IMR-90 (cell line): ENCODE measurements at regions of chr4 and their contacts with region 1.

Region 1: DNA sequence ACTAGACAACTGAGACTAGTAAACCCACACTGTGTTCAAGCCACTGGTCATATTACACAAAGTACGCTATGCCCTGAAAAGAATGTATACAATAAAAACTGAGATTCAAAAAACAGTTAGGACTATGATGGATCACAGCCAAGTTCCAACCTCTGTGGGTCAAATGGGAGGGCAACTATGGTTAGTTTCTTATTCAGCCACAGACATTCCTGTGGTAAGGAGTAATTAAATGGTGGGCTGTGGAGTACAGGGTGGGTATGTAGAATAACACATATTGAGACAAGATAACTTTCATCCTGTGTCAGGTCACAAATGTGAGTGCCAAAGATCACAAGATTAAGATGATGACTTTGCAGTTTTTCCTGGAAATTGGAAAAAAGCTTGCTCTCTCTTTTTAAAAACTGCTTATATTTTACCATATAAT is 167.2 kb downstream of the NPNT start:
- DNase-seq: peak; percentile 70
- ATAC-seq: peak; percentile 86
- H3K4me3 ChIP-seq: no peak overlapping the region
- H3K27ac ChIP-seq: no peak overlapping the region
- H3K4me1 ChIP-seq: peaks cover 2% of the 10 kb centered on the region; the same call in 1 of the 2 replicates
- H3K27me3 ChIP-seq: no peaks in the 10 kb centered on the region; the same call in 1 of the 2 replicates
- CTCF ChIP-seq: no peak
- POLR2A ChIP-seq: no peak
- RAD21 ChIP-seq: no peak

Region 2: DNA sequence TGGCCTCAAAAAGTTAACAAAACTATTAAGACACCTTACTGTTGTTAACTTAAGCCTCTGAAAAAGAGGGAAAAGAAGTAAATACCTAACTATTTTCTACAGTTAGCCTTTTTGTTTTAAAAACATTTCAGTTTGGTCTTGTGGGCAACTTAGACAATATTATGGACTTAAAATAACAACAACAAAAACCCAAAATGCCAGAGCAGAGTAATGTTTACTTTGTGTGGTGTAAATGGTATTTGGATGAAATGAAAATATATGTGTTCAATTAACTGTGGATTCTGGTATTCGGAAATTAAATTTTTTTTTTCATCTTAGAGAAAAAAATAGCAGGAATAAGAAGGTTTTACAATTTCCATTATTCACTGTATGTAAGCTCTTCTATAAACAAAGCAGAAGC is 246.8 kb before region 1 on chr4:
- CTCF ChIA-PET with region 1: no interaction called
- POLR2A ChIA-PET with region 1: no interaction called
- dilution Hi-C with region 1: no loop called
- in situ Hi-C with region 1: no loop called
- intact Hi-C with region 1: no loop called
- DNase-seq: no peak
- ATAC-seq: no peak
- H3K4me3 ChIP-seq: no peak overlapping the region
- H3K27ac ChIP-seq: no peak overlapping the region
- H3K4me1 ChIP-seq: no peaks in the 10 kb centered on the region
- H3K27me3 ChIP-seq: no peaks in the 10 kb centered on the region
- CTCF ChIP-seq: no peak
- POLR2A ChIP-seq: no peak
- RAD21 ChIP-seq: no peak

Region 3: DNA sequence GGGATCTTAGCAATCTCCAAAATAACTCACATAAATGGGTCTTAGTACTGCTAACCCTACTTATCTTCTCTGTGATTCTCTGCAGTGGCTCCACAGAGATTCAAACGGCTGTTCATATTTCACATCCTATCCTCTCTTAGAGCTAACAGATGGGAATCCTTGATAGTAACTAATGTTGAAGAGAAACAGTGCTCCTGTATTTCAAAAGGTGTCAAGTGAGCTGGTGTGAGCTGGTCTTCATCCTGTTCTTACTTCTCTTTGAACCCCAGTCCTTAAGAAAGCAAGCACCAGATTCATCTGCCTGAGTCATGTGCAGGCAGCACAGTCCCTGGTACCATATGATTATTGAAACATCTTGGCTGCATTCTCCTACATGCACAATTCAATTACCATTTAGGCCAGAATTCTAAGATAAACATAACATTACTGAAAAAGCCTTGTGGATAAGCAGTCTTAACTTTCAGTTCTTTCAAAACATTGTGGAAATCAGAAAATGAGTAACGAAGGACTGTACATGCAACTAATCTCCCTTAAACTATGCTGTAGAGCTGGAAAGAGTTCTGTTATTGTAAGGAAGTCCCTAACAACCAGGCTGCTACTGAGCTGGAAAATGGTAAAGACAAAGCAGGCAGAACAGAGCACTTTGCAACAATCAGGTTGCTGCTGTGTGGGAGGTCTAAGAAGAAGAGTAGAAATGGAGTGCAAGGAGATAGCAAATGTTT is 14.1 kb before region 1 on chr4:
- CTCF ChIA-PET with region 1: no interaction called
- POLR2A ChIA-PET with region 1: no interaction called
- dilution Hi-C with region 1: no loop called
- in situ Hi-C with region 1: no loop called
- intact Hi-C with region 1: loop called (anchors 2 kb)
- DNase-seq: peak; percentile 77
- ATAC-seq: peak; percentile 93
- H3K4me3 ChIP-seq: no peak overlapping the region
- H3K27ac ChIP-seq: no peak overlapping the region; the same call in 1 of the 2 replicates
- H3K4me1 ChIP-seq: peaks cover 2% of the 10 kb centered on the region
- H3K27me3 ChIP-seq: no peaks in the 10 kb centered on the region
- CTCF ChIP-seq: no peak
- POLR2A ChIP-seq: no peak
- RAD21 ChIP-seq: no peak

Region 4: GRCh38 chr4:106149026-106149425 is 86.6 kb after region 1 on chr4:
- CTCF ChIA-PET with region 1: no interaction called
- POLR2A ChIA-PET with region 1: no interaction called
- dilution Hi-C with region 1: no loop called
- in situ Hi-C with region 1: no loop called
- intact Hi-C with region 1: no loop called
- DNase-seq: no peak
- ATAC-seq: no peak
- H3K4me3 ChIP-seq: no peak overlapping the region
- H3K27ac ChIP-seq: no peak overlapping the region
- H3K4me1 ChIP-seq: no peaks in the 10 kb centered on the region
- H3K27me3 ChIP-seq: no peaks in the 10 kb centered on the region
- CTCF ChIP-seq: no peak
- POLR2A ChIP-seq: no peak
- RAD21 ChIP-seq: no peak